Kidney (tissue), 22 donors: ENCODE measurements at regions of chr10 and their contacts with region 1.

Region 1: DNA sequence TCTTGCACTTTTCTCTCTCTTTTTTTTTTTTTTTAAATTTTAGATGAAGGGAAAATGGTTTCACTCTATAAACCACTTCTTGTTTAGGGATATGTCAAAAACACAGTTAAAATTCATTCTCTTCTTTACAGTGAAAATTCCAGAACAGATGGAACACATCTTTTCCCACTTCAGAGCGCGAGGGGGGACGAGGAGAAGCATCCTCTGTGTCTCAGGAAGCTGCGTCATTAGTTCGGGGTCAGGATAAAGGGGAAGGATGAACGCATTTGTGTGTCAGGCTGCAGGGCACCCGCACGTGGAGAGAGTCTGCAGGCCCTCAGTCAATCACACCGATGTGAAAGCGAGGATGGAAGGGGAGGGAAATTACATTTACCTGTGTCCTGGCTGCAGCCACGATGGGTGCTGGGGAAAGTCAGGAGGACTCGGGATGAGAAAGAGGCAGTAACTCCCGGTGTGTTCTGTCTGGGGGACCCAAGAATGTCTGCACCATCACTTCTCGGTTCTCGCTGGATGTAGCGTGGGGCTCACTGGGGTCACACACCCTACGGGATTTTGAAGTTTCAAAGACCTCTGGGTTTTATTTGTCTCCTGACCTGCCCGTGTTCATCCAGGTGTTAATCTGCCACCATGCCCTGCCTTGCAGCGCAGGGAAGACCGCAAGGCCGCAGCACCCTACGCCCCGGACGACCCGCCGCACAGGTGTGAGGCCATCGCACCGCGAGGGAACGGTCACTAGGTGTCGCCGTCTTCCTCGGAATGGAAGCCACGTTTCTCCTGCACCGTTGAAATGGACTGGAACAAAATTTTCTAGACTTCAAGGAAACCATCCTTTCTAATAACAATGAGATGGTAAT is 66.7 kb upstream of the PITRM1 start:
- DNase-seq: peak; percentile 50 to 87 (median 80)
- H3K4me3 ChIP-seq: no peak overlapping the region
- H3K27ac ChIP-seq: no peak overlapping the region
- H3K4me1 ChIP-seq: no peaks in the 10 kb centered on the region
- H3K27me3 ChIP-seq: no peaks in the 10 kb centered on the region
- CTCF ChIP-seq: peak; percentile 92

Region 2: GRCh38 chr10:4656576-4657182 is 1417.4 kb after region 1 on chr10:
- intact Hi-C with region 1: loop called (anchors 10 kb)
- DNase-seq: peak in 4 of 5 donors; percentile 69 to 89 (median 75)
- H3K4me3 ChIP-seq: no peak overlapping the region
- H3K27ac ChIP-seq: no peak overlapping the region
- H3K4me1 ChIP-seq: peaks cover 0 to under 1% (median 0%) of the 10 kb centered on the region in 3 donors
- H3K27me3 ChIP-seq: no peaks in the 10 kb centered on the region
- CTCF ChIP-seq: peak; percentile 86

Region 3: GRCh38 chr10:4770801-4771553 is 1531.7 kb after region 1 on chr10:
- intact Hi-C with region 1: loop called (anchors 5 kb)
- DNase-seq: peak in 2 of 5 donors; percentile 35 to 63
- H3K4me3 ChIP-seq: no peak overlapping the region
- H3K27ac ChIP-seq: peak overlapping the region in 1 of 2 donors; percentile 23
- H3K4me1 ChIP-seq: no peaks in the 10 kb centered on the region
- H3K27me3 ChIP-seq: no peaks in the 10 kb centered on the region
- CTCF ChIP-seq: peak; percentile 28